ENCODE measurements at regions of chr18 and their contacts with region 1.

Region 1: DNA sequence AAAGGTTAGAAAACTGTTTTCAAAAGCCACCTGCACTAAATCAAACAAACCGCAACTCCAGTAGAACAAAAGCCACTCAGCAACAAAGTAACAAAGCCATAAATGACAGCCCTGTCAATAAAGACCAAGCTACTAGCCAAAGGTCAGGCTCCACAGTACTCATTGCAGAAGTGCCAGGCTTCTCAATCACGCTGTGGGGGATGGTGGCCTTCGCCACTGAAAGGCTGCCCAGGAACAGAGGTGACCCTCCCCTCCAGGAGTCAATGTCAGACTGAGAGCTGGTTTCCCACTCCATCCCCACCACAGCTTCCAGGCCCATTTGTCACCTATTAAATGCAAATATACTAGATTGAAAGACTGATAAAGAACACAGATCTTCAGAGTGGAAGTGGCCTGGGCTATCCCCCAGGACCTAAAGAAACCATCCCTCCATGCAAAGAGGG is 5.9 kb downstream of the ATP8B1 start:
- DNase-seq: no peak
- ATAC-seq: no peak
- H3K4me3 ChIP-seq: no peak overlapping the region
- H3K27ac ChIP-seq: peak overlapping the region; percentile 62
- H3K4me1 ChIP-seq: peaks cover 21% of the 10 kb centered on the region
- H3K27me3 ChIP-seq: no peaks in the 10 kb centered on the region
- CTCF ChIP-seq: no peak
- POLR2A ChIP-seq: no peak
- RAD21 ChIP-seq: no peak

Region 2: GRCh38 chr18:57787068-57787685 is 10.1 kb before region 1 on chr18:
- CTCF ChIA-PET with region 1: no interaction called
- POLR2A ChIA-PET with region 1: interaction called, 11 read pairs
- dilution Hi-C with region 1: no loop called
- in situ Hi-C with region 1: no loop called
- intact Hi-C with region 1: no loop called
- DNase-seq: no peak
- ATAC-seq: no peak
- H3K4me3 ChIP-seq: no peak overlapping the region
- H3K27ac ChIP-seq: no peak overlapping the region
- H3K4me1 ChIP-seq: peaks cover 22% of the 10 kb centered on the region
- H3K27me3 ChIP-seq: no peaks in the 10 kb centered on the region
- CTCF ChIP-seq: no peak
- POLR2A ChIP-seq: no peak
- RAD21 ChIP-seq: no peak

Region 3: DNA sequence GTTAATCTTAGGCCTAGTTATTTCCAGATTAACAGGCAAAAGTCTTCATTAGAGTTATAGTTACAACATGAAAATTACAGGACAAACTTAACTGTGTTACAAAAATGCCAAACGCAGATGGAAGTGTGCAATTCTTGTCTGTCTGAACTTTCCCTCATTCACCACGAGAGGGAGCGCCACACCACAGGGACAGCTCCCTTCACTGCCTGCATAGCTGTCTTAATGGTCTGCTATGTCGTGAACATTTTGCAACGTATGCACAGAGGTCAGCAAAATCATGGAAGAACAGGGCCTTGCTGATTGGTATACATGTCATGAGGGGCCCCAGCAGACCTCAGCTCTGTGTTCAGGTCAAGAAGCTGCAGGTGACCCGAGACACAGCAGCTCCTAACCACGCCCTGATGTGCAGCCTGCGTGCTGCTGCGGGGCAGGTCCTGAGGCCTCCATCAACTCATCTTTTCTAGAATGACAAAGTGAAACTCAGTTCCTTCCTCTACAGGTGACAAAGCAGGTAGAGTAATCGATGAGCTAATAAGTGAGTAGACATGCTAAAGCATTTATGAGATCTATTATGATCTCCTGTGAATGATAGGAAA is 84.7 kb after region 1 on chr18:
- CTCF ChIA-PET with region 1: no interaction called
- POLR2A ChIA-PET with region 1: no interaction called
- dilution Hi-C with region 1: no loop called
- in situ Hi-C with region 1: no loop called
- intact Hi-C with region 1: no loop called
- DNase-seq: peak; percentile 86
- ATAC-seq: peak; percentile 100
- H3K4me3 ChIP-seq: no peak overlapping the region
- H3K27ac ChIP-seq: no peak overlapping the region
- H3K4me1 ChIP-seq: no peaks in the 10 kb centered on the region
- H3K27me3 ChIP-seq: 0 out of 2 replicates have a peak, but pooled peaks cover 2% of the 10 kb centered on the region
- CTCF ChIP-seq: peak; percentile 97
- POLR2A ChIP-seq: 0 out of 2 replicates have a peak, but pooled peaks have one; percentile 25
- RAD21 ChIP-seq: peak; percentile 99

Measured in IMR-90 (cell line).